ENCODE measurements at regions of chr9 and their contacts with region 1.

Region 1: DNA sequence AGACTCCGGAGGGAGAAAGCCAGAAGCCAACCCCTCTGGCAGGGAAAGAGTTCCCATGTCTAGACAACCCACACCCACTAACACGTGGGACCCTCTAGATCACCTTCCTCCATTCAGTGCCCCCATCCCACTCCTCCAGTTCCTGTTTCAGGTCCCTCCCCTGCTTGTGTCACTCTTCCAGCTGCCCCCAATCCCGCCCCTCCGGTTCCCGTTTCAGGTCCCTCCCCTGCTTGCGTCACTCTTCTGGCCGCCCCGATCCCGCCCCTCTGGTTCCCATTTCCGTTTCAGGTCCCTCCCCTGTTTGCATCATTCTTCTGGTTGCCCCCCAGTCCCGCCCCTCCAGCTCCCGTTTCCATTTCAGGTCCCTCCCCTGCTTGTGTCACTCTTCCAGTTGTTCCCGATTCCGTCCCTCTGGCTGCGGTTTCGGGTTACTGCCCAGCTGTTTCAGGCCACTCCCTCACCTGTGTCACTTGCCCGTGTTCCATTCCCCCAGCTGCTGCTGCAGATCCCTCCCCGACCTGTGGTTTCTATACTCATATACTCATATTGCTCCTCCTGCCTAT is 64.8 kb upstream of the RANBP6 start:
- DNase-seq: peak; percentile 92
- ATAC-seq: peak; percentile 93
- H3K4me3 ChIP-seq: peak overlapping the region; percentile 62
- H3K27ac ChIP-seq: peak overlapping the region; percentile 54
- H3K4me1 ChIP-seq: peaks cover 11% of the 10 kb centered on the region
- H3K27me3 ChIP-seq: no peaks in the 10 kb centered on the region
- CTCF ChIP-seq: no peak

Region 2: GRCh38 chr9:6008169-6008979 is 71.9 kb before region 1 on chr9:
- CTCF ChIA-PET with region 1: no interaction called
- POLR2A ChIA-PET with region 1: interaction called, 12 read pairs
- intact Hi-C with region 1: no loop called
- DNase-seq: peak; percentile 93
- ATAC-seq: peak; percentile 60
- H3K4me3 ChIP-seq: peak overlapping the region; percentile 93
- H3K27ac ChIP-seq: peak overlapping the region; percentile 62
- H3K4me1 ChIP-seq: peaks cover 43% of the 10 kb centered on the region
- H3K27me3 ChIP-seq: no peaks in the 10 kb centered on the region
- CTCF ChIP-seq: no peak

Region 3: DNA sequence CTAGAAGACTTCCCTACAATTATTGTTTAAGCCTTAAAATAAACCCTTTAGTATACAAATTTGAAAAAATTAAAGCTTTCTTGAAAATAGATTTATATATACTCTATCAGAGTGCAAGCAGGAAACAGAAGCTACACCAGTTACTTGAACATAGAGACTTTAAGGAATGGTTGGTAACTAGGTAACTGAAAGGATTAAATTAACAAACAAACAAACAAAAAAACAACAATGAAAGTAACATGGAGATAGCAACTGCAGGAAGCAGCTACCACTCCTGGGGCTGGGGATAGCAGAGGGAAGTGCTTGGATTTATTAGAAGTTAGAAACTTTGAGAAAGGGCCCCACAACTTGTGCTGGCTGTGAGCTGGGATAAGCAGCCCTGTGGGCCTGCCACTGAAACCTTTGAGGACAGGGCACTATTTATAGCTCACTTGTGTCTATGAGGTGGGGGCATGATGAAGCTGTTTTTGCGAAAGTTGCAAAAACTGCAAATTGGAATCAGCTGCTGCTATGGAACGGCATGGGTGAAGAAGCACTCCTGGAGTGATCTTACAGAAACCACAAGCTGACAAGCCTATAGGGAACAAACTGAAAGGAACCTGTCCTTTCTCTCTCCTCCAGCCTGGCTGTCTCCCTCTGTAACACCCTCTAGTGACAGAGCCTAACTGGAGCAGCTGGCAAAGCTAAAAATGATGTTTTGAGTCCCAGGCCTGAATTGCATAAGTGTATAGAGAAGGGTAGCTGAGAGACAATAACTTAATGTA is 26.5 kb after region 1 on chr9:
- CTCF ChIA-PET with region 1: interaction called, 3 read pairs
- POLR2A ChIA-PET with region 1: no interaction called
- intact Hi-C with region 1: loop called (anchors 1 kb)
- DNase-seq: peak; percentile 60
- ATAC-seq: peak; percentile 66
- H3K4me3 ChIP-seq: peak overlapping the region; percentile 30; the same call in 1 of the 2 replicates
- H3K27ac ChIP-seq: peak overlapping the region; percentile 84
- H3K4me1 ChIP-seq: peaks cover 44% of the 10 kb centered on the region
- H3K27me3 ChIP-seq: no peaks in the 10 kb centered on the region
- CTCF ChIP-seq: peak; percentile 61

Region 4: GRCh38 chr9:6133346-6134063 is 53.3 kb after region 1 on chr9:
- CTCF ChIA-PET with region 1: no interaction called
- POLR2A ChIA-PET with region 1: no interaction called
- intact Hi-C with region 1: loop called (anchors 10 kb)
- DNase-seq: peak; percentile 72
- ATAC-seq: peak; percentile 65
- H3K4me3 ChIP-seq: no peak overlapping the region
- H3K27ac ChIP-seq: peak overlapping the region; percentile 76
- H3K4me1 ChIP-seq: peaks cover 26% of the 10 kb centered on the region
- H3K27me3 ChIP-seq: no peaks in the 10 kb centered on the region
- CTCF ChIP-seq: no peak

Region 5: DNA sequence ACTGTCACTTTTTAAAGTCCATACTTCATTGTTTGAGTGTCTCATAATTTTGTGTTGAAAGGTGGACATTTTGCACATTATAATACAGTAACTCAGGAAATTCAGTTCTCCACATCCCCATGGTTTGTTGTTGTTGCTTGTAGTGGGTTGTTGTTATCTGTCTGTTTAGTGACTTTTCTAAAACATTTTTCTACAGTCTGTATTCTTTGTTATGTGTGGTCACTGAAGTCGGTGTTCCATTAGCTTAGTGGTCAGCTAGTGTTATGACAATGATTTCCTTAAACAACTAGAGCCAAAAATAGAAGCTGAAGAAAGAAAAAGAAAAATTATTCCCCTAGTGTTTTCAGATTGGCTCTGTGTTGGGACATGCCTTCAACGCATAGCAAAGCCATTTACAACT is 129.7 kb after region 1 on chr9:
- CTCF ChIA-PET with region 1: no interaction called
- POLR2A ChIA-PET with region 1: interaction called, 13 read pairs
- intact Hi-C with region 1: no loop called
- DNase-seq: no peak
- ATAC-seq: no peak
- H3K4me3 ChIP-seq: no peak overlapping the region
- H3K27ac ChIP-seq: no peak overlapping the region
- H3K4me1 ChIP-seq: peaks cover 9% of the 10 kb centered on the region; the same call in 1 of the 2 replicates
- H3K27me3 ChIP-seq: no peaks in the 10 kb centered on the region
- CTCF ChIP-seq: no peak

Region 6: DNA sequence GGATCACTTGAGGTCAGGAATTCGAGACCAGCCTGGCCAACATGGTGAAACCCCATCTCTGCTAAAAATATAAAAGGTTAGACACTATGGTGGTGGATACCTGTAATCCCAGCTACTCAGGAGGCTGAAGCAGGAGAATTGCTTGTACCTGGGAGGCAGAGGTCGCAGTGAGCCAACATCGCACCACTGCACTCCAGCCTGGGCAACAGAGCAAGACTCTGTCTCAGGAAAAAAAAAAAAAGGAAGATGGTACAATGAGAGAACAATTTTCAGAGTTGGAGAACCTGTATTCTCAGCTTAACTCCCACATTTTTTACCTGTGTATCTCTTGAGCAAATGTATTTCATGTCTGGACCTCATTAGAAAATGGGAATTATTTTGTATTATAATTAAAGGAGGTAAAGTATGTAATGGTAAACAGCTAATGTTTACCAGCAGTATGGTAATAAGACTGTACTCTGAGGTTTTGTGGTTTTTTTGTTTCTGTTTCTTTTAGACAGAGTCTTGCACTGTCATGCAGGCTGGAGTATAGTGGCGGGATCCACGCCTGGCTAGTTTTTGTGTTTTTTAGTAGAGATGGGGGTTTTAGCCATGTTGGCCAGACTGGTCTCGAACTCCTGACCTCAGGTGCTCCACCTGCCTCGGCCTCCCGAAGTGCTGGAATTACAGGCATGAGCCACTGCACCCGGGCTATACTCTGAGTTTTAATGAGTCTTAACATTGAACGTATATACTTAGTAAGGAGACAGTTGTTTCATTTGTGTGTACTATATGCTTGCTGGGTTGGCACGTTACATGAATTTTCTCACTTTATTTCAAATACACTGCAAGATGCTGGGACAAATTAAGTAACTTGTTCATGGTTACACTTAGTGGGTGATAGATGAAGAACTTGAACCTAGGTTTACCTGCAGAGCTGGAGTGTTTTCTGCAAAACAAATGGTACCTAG is 349.0 kb after region 1 on chr9:
- CTCF ChIA-PET with region 1: no interaction called
- POLR2A ChIA-PET with region 1: interaction called, 12 read pairs
- intact Hi-C with region 1: no loop called
- DNase-seq: no peak
- ATAC-seq: no peak
- H3K4me3 ChIP-seq: no peak overlapping the region
- H3K27ac ChIP-seq: no peak overlapping the region
- H3K4me1 ChIP-seq: no peaks in the 10 kb centered on the region
- H3K27me3 ChIP-seq: no peaks in the 10 kb centered on the region
- CTCF ChIP-seq: no peak